BJ (cell line): ENCODE measurements at regions of chr16 and their contacts with region 1.

Region 1: GRCh38 chr16:74666425-74667254 is at the start of gene RFWD3:
- DNase-seq: peak; percentile 87
- H3K4me3 ChIP-seq: peak within 1 kb of the TSS; percentile 93
- H3K27me3 ChIP-seq: no peaks in the 10 kb centered on the region
- CTCF ChIP-seq: no peak
- polyA plus RNA-seq, gene RFWD3: 20.2 and 20.7 TPM in 2 replicates

Region 2: GRCh38 chr16:74650966-74651567 is 15.6 kb before region 1 on chr16:
- CTCF ChIA-PET with region 1: interaction called, 15 read pairs
- POLR2A ChIA-PET with region 1: interaction called, 13 read pairs
- DNase-seq: no peak
- H3K4me3 ChIP-seq: no peak overlapping the region
- H3K27me3 ChIP-seq: no peaks in the 10 kb centered on the region
- CTCF ChIP-seq: peak; percentile 58

Region 3: GRCh38 chr16:74679983-74680382 is 13.3 kb after region 1 on chr16:
- CTCF ChIA-PET with region 1: interaction called, 3 read pairs
- POLR2A ChIA-PET with region 1: interaction called, 12 read pairs
- DNase-seq: no peak
- H3K4me3 ChIP-seq: no peak overlapping the region
- H3K27me3 ChIP-seq: no peaks in the 10 kb centered on the region
- CTCF ChIP-seq: no peak

Region 4: DNA sequence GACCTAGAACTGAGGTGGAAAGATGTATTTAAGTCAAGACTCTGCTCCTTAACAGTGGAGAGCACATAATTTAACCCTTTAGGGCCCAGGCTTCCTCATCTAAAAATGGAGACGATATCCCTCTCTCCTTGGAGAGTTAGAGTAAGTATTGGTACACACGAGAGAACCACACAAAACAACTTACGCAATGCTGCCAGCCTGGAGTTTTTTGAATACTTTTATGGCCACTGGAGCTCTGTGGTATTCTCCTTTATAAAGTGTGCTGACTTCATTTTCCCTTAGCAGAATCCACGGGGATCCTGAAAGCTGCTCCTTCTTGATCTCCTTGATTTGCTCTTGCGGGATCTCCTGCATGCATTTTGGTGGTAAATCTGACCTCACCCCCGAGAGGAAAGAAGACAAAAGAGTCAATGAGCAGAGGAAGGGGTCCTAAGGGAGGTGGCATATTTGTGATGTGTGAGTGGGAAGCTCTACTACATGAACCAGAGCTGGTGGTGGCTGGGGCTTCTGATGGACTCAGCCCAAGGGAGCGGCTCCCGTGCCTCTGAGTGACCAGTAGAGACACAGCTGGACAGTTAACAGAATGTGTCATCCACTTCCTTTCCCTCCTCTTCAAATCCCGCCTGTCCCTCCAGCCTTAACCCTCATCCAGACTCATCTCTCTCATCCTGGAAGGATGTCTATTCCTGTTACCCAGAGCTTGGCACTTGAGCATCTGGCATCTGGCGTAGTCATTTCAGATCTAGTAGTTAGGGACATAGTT is 24.6 kb after region 1 on chr16:
- CTCF ChIA-PET with region 1: no interaction called
- POLR2A ChIA-PET with region 1: no interaction called
- DNase-seq: no peak
- H3K4me3 ChIP-seq: no peak overlapping the region
- H3K27me3 ChIP-seq: no peaks in the 10 kb centered on the region
- CTCF ChIP-seq: no peak

Region 5: DNA sequence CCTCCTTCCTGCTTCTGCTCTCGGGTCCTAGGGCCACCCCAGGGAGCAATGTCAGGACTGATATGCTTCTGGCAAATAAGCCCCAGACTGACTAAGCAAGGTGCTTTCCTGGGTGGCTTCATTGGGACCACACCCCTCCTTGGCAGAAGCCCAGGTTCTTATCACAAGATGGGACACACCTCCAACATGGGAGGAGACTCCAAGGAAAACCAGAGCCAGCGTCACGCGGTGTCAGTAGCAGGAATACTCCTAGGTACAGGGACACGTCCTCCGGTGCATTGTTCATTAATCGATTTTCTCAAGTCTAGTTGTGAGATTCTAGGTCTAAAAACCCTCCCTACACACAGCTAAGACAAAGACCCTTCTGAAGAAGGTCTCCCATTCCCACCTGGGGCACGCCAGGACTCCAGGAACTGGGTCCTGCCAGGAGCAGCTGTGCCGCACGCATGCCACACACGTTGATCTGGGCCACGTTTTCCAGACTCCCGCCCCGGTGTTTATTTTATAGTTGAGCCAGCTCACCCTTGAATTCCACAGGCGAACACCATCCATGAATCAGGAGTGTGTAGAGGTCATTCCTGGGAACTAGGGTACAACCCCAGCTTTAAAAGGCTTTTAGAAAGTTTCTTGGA is 77.1 kb after region 1 on chr16:
- CTCF ChIA-PET with region 1: no interaction called
- POLR2A ChIA-PET with region 1: no interaction called
- DNase-seq: no peak
- H3K4me3 ChIP-seq: no peak overlapping the region
- H3K27me3 ChIP-seq: no peaks in the 10 kb centered on the region
- CTCF ChIP-seq: no peak